Naive thymus-derived CD8-positive, alpha-beta T cell (primary cell): ENCODE measurements at regions of chr1 and their contacts with region 1.

Region 1: GRCh38 chr1:108691942-108692723 is at the start of gene PRPF38B:
- DNase-seq: peak; percentile 88 to 96 (median 93)
- ATAC-seq: peak; percentile 81 to 84
- H3K4me3 Mint-ChIP-seq: peak within 1 kb of the TSS; percentile 87 to 100 (median 96)
- H3K27ac Mint-ChIP-seq: peak within 1 kb of the TSS; percentile 95 to 99 (median 98)
- H3K4me1 Mint-ChIP-seq: peaks cover 18 to 50% (median 41%) of the 10 kb centered on the region in 4 donors
- H3K27me3 Mint-ChIP-seq: no peaks in the 10 kb centered on the region
- polyA plus RNA-seq, gene PRPF38B: 18.9 to 21.7 (median 19.1) TPM

Region 2: DNA sequence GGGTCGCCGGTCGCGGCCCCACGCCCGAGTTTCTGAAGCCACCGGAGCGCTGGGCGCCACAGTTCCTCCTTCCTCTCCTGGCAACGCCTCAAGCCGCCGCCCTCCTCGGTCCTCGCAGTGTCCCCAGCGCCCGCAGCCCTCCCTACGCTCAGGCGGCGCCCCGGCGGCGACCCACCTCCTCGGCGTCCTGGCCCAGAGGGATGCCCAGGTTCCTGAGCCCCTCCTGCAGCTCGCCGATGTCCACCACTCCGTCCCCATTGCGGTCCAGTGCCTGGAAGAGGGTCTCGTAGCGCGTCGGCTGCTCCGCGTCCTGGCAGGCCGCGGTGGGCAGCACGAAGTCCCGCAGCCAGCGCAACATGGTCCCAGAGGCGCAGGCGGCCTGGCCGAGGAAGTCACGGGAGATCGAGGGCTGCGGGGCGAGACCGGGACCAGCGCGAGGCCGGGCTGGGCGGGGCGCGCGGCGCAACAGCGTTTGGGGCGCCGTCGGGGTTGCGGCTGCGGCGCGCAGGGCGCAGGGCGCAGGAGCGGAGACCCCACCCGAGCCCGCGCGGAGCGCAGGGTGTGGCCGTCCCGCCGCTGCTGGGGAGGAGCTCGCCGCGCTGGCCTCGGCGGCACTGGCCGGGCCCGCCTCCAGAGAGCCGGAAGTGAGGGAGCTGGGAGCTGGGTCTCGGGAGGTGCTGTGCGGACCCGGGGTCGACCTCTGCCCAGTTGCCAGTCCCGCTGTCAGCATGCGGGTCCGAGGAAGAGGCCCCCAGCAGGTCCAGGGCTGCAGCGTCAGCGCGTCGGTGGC is 492.2 kb before region 1 on chr1 and contains the start of gene SLC25A24:
- POLR2A ChIA-PET with region 1: interaction called, 10 read pairs
- DNase-seq: peak; percentile 52 to 83 (median 62)
- ATAC-seq: peak; percentile 93 to 94
- H3K4me3 Mint-ChIP-seq: peak within 1 kb of the TSS; percentile 83 to 94 (median 91)
- H3K27ac Mint-ChIP-seq: peak within 1 kb of the TSS; percentile 66 to 94 (median 86)
- H3K4me1 Mint-ChIP-seq: peaks cover 6 to 41% (median 31%) of the 10 kb centered on the region in 4 donors
- H3K27me3 Mint-ChIP-seq: peaks cover 0 to 1% (median 0%) of the 10 kb centered on the region in 5 donors
- polyA plus RNA-seq, gene SLC25A24: 6.4 to 10.2 (median 7.1) TPM

Region 3: DNA sequence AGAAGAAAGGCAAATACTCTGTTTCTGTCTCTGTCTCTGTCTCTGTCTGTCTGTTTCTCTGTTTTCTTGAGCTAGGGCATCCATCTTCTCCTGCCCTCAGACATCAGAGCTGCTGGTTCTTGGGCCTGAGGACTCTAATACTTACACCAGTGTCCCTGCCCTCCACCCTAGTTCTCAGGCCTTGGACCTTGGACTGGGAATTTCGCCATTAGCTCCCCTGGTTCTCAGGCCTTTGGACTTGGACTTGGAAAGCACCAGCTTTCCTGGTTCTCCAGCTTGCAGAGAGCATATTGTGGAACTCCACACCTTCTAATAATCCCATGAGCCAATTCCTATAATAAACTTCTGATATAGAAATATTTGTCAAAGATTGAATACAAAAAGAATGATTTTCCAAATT is 209.4 kb before region 1 on chr1:
- POLR2A ChIA-PET with region 1: no interaction called
- DNase-seq: no peak
- ATAC-seq: no peak
- H3K4me3 Mint-ChIP-seq: no peak overlapping the region
- H3K27ac Mint-ChIP-seq: no peak overlapping the region
- H3K4me1 Mint-ChIP-seq: peaks cover 0 to 1% (median 0%) of the 10 kb centered on the region in 4 donors
- H3K27me3 Mint-ChIP-seq: peaks cover 0 to 11% (median 10%) of the 10 kb centered on the region in 5 donors

Region 4: DNA sequence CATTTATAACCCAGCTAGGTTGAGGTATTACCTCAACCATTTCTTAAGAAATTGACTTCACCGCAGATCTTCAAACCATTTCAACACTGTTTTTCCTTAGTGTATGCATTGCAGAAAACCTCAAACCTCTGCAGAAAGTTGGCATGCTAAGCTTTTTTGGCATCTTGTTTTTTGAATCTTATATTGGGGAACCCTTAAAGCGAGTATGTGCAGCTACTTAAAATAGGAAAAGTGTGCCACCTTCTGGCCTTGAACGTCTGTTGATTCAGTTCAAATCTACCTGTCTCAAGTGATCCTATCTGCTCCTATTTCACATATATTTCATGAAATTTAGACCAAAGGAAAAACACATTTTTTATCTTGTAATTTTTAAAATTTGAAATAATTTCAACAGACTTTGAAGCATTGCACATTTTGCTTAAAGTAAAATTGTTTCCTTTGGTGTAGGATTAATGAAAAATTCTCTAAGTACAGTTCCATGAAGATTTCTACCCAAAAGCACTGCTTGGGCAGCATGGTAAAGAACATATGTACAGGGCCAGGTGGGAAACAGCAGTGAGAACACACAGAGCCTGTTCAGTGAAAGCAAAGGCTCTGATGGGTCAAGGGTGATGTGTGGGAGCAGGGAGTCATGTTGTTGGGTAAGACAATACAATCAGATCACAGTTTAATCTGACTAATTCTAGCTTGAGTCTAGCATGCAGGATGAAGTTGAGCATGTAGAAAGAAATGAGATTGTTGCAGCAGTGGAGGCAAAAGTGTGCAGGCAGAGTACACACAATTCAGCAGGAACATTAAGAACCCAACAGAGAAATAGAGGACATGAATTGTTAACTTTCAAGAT is 48.4 kb before region 1 on chr1:
- POLR2A ChIA-PET with region 1: interaction called, 366 read pairs
- DNase-seq: peak in 9 of 10 donors; percentile 31 to 80 (median 60)
- ATAC-seq: peak; percentile 17 to 24
- H3K4me3 Mint-ChIP-seq: peak overlapping the region in 8 of 10 donors; percentile 12 to 84 (median 48)
- H3K27ac Mint-ChIP-seq: peak overlapping the region; percentile 34 to 100 (median 99)
- H3K4me1 Mint-ChIP-seq: peaks cover 48 to 83% (median 80%) of the 10 kb centered on the region in 4 donors
- H3K27me3 Mint-ChIP-seq: no peaks in the 10 kb centered on the region

Region 5: DNA sequence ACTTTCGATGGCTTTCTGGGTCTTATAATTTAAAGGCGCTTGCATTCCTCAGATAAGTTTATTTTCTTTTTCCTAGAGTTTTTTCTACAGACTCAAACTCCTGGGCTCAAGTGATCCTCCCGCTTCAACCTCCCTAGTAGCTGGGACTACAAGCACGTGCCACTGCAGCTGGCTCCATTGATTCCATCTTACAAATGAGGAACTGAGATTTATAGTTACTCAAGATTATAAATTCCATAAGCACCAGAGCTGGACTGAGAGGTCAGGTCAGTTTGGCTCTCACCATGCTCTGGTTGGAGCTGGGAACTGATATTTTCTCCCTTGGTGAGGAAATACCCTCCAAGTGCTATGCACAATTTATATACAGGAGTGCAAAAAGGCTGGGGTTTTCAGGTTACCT is 13.4 kb before region 1 on chr1:
- POLR2A ChIA-PET with region 1: interaction called, 15 read pairs
- DNase-seq: no peak
- ATAC-seq: no peak
- H3K4me3 Mint-ChIP-seq: no peak overlapping the region
- H3K27ac Mint-ChIP-seq: no peak overlapping the region
- H3K4me1 Mint-ChIP-seq: peaks cover 4 to 13% (median 6%) of the 10 kb centered on the region in 4 donors
- H3K27me3 Mint-ChIP-seq: peaks cover 0 to 3% (median 0%) of the 10 kb centered on the region in 5 donors

Region 6: GRCh38 chr1:108746372-108747205 is 54.5 kb after region 1 on chr1 and contains the start of gene STXBP3:
- POLR2A ChIA-PET with region 1: interaction called, 13 read pairs
- DNase-seq: peak; percentile 98 to 100 (median 100)
- ATAC-seq: peak; percentile 92 to 93
- H3K4me3 Mint-ChIP-seq: peak within 1 kb of the TSS; percentile 92 to 100 (median 97)
- H3K27ac Mint-ChIP-seq: peak within 1 kb of the TSS; percentile 95 to 99 (median 98)
- H3K4me1 Mint-ChIP-seq: peaks cover 26 to 47% (median 38%) of the 10 kb centered on the region in 4 donors
- H3K27me3 Mint-ChIP-seq: peaks cover 0 to 2% (median 0%) of the 10 kb centered on the region in 5 donors
- polyA plus RNA-seq, gene STXBP3: 39.8 to 46.1 (median 43.6) TPM

Region 7: GRCh38 chr1:108897865-108898720 is 206.0 kb after region 1 on chr1:
- POLR2A ChIA-PET with region 1: interaction called, 11 read pairs
- DNase-seq: peak in 6 of 10 donors; percentile 24 to 64 (median 40)
- ATAC-seq: peak; percentile 77 to 82
- H3K4me3 Mint-ChIP-seq: no peak overlapping the region
- H3K27ac Mint-ChIP-seq: no peak overlapping the region
- H3K4me1 Mint-ChIP-seq: peaks cover 0 to 3% (median under 1%) of the 10 kb centered on the region in 4 donors
- H3K27me3 Mint-ChIP-seq: peaks cover 0 to 3% (median 0%) of the 10 kb centered on the region in 5 donors

Region 8: DNA sequence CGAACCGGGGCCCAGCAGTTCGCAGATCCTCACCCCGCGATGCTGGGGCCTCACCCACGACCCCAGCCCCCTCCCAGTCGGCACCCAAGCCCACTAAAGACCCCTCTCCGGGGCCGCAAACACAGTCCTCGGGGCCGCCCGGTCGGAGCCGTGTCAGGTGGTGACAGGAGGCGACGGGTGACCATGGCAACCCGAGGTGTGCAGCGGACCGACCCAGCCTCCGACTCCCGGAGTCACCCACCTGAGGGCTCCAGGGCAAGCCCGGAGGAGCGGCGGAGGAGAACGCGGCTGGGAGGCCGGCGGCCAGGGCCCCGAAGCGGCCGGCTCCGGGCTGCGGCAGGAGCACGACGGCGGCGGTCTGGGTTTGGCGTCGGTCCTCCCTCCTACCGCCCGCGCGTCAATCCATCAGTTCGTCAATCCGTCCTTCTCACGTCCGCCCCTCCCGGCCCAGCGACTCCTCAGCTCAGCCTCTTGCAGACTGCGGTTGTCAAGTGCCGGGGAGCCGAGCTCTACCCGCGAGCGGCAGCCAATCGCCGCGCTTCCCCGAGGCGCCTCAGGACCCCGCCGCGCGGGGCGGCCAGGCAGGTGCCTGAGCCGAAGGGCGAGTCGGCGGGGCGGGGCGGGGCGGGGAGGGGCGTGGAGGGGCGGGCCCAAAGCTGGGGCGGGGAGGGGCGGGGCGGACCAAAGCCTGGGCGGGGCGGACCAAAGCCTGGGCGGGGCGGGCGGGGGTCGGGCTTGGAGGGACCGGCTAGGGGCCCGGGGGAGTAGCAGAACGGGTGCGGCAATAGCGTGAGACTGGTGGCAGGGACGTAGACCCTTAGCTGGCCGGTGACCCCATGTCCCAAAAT is 349.7 kb after region 1 on chr1 and contains the start of gene WDR47:
- POLR2A ChIA-PET with region 1: no interaction called
- DNase-seq: peak; percentile 92 to 98 (median 96)
- ATAC-seq: peak; percentile 95 to 96
- H3K4me3 Mint-ChIP-seq: peak within 1 kb of the TSS; percentile 84 to 98 (median 94)
- H3K27ac Mint-ChIP-seq: peak within 1 kb of the TSS; percentile 80 to 97 (median 94)
- H3K4me1 Mint-ChIP-seq: peaks cover 6 to 20% (median 14%) of the 10 kb centered on the region in 4 donors
- H3K27me3 Mint-ChIP-seq: peaks cover 0 to 6% (median 0%) of the 10 kb centered on the region in 5 donors
- polyA plus RNA-seq, gene WDR47: 3.0 to 6.1 (median 5.7) TPM

Region 9: DNA sequence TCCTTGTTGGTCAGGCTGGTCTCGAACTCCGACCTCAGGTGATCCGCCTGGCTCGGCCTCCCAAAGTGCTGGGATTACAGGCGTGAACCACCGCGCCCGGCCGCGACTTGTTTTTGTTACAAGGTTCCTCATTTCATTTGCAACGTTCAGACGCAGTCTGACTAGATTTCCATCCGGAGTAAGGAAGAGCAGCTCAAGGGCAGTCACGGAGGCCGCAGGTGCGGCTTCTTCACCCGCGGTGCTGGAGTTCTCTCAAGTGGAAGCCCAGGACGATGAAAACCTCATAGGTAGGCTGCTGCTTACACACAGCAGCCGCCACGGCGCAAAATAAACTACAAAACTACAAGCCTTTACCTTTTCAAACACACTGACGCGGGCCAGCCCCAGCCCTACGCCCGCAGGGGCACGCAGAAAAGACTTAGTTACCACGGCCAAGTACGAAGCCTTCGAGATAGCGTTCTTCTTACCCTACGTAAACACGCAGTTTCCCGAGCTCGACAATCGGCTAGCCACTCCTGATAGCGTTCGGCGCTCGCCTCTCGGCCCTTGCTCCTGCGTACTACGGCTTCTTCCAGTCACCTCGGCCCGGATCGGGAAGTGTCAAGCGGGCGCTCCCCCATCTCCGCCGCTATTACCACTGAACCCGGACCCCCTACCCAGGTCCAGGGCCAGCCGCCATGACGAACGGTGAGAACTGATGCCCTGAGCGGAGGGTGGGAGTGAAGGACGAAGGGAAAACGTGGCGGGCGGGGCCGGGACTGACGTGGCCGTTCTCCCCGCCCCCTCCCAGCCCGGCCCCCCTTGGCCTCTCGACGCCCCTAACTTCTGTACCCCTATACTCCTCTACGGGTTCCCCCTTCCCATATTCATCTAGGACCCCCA is 398.3 kb after region 1 on chr1 and contains the start of gene TMEM167B:
- POLR2A ChIA-PET with region 1: interaction called, 12 read pairs
- DNase-seq: peak; percentile 71 to 94 (median 87)
- ATAC-seq: peak; percentile 88 to 93
- H3K4me3 Mint-ChIP-seq: peak within 1 kb of the TSS; percentile 88 to 98 (median 96)
- H3K27ac Mint-ChIP-seq: peak within 1 kb of the TSS; percentile 96 to 99 (median 98)
- H3K4me1 Mint-ChIP-seq: peaks cover 18 to 38% (median 30%) of the 10 kb centered on the region in 4 donors
- H3K27me3 Mint-ChIP-seq: no peaks in the 10 kb centered on the region
- polyA plus RNA-seq, gene TMEM167B: 28.8 to 32.0 (median 29.6) TPM